ENCODE measurements at regions of chr12 and their contacts with region 1.

Region 1: GRCh38 chr12:58931526-58931925 is 11.2 kb upstream of the LRIG3 start:
- DNase-seq: no peak
- H3K4me3 ChIP-seq: no peak overlapping the region
- H3K27ac ChIP-seq: no peak overlapping the region
- H3K4me1 ChIP-seq: no peaks in the 10 kb centered on the region; a peak in 2 of 7 replicates
- H3K27me3 ChIP-seq: no peaks in the 10 kb centered on the region
- CTCF ChIP-seq: peak; percentile 6 to 44 (median 26); a peak in 3 of 4 replicates
- EP300 ChIP-seq: no peak
- POLR2A ChIP-seq: no peak
- RAD21 ChIP-seq: peak; percentile 23 to 33; a peak in 3 of 4 replicates

Region 2: GRCh38 chr12:58873486-58873885 is 58.0 kb before region 1 on chr12:
- CTCF ChIA-PET with region 1: no interaction called
- POLR2A ChIA-PET with region 1: no interaction called
- DNase-seq: no peak
- H3K4me3 ChIP-seq: no peak overlapping the region
- H3K27ac ChIP-seq: no peak overlapping the region
- H3K4me1 ChIP-seq: no peaks in the 10 kb centered on the region
- H3K27me3 ChIP-seq: no peaks in the 10 kb centered on the region
- CTCF ChIP-seq: no peak
- EP300 ChIP-seq: no peak
- POLR2A ChIP-seq: no peak
- RAD21 ChIP-seq: no peak

Region 3: GRCh38 chr12:58920102-58920960 is 11.2 kb before region 1 on chr12 and contains the start of gene LRIG3:
- CTCF ChIA-PET with region 1: interaction called, 15 read pairs
- POLR2A ChIA-PET with region 1: interaction called, 6 read pairs
- DNase-seq: peak in 1 of 2 experiments; percentile 83
- H3K4me3 ChIP-seq: peak within 1 kb of the TSS; percentile 50 to 76 (median 61)
- H3K27ac ChIP-seq: peak within 1 kb of the TSS; percentile 24; the same call in 1 of the 2 replicates
- H3K4me1 ChIP-seq: peaks cover 0 to 6% (median 2%) of the 10 kb centered on the region in 4 experiments; a peak in 4 of 7 replicates
- H3K27me3 ChIP-seq: peaks cover 0 to 7% (median 2%) of the 10 kb centered on the region in 4 experiments; a peak in 2 of 7 replicates
- CTCF ChIP-seq: peak in 1 of 3 experiments; percentile 14; a peak in 1 of 4 replicates
- EP300 ChIP-seq: no peak
- POLR2A ChIP-seq: no peak
- RAD21 ChIP-seq: no peak
- total RNA-seq, gene LRIG3: 9.1 and 9.3 TPM in 2 replicates

Measured in H1 (cell line).